GM12878 (cell line): ENCODE measurements at regions of chr5 and their contacts with region 1.

Region 1: DNA sequence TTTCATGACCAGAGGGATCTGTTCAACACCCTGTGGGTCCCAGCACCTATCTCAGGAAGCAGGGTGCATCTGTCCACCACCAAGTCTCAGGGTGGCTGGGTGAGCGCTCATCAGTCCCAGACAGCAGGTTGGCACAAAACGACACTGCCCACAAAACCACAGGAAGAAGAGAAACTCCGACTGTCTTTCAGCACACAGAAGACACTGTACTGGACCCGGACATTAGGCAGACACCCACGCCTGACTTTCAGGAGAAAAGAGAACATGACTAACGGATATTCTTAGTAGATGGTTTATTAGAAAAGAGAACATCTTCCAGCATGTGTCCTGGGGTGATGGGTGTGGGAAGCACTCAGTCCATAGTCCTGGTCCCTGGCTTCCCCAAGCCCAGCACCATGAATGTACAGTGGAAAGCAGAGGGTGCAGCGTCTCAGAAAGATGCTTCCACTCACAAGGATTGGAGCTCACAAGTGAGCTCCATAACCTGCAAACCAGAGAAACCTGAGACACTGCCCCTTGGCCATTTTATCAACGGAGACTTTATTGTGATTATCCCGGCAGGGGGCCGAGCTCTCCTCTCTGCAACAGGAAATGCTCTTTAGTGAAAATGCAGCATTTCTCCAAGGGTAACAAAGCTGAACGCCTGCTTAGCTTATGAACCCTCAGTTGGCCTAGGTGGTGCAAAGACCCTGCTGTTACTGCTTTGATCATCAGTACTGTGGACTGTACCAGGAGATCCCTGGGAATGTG is 35.8 kb upstream of the LCP2 start:
- DNase-seq: peak; percentile 79
- ATAC-seq: peak; percentile 54
- H3K4me3 ChIP-seq: no peak overlapping the region
- H3K27ac ChIP-seq: 0 out of 2 replicates have a peak overlapping the region, but pooled peaks have one; percentile 5
- H3K4me1 ChIP-seq: peaks cover 46% of the 10 kb centered on the region
- H3K27me3 ChIP-seq: no peaks in the 10 kb centered on the region
- CTCF ChIP-seq: no peak
- EP300 ChIP-seq: 0 out of 4 replicates have a peak, but pooled peaks of 1 of the 2 experiments have one; percentile 28
- POLR2A ChIP-seq: no peak
- RAD21 ChIP-seq: 0 out of 2 replicates have a peak, but pooled peaks have one; percentile 4

Region 2: GRCh38 chr5:169339869-169340268 is 993.5 kb before region 1 on chr5:
- CTCF ChIA-PET with region 1: no interaction called
- POLR2A ChIA-PET with region 1: no interaction called
- RAD21 ChIA-PET with region 1: no interaction called
- SMC1A ChIA-PET with region 1: no interaction called
- in situ Hi-C with region 1: no loop called
- intact Hi-C with region 1: no loop called
- DNase-seq: peak; percentile 8
- ATAC-seq: peak; percentile 20
- H3K4me3 ChIP-seq: no peak overlapping the region
- H3K27ac ChIP-seq: no peak overlapping the region
- H3K4me1 ChIP-seq: no peaks in the 10 kb centered on the region
- H3K27me3 ChIP-seq: 0 out of 4 replicates have a peak, but pooled peaks cover 2% of the 10 kb centered on the region in 2 experiments
- CTCF ChIP-seq: no peak
- EP300 ChIP-seq: no peak
- POLR2A ChIP-seq: no peak
- RAD21 ChIP-seq: no peak

Region 3: DNA sequence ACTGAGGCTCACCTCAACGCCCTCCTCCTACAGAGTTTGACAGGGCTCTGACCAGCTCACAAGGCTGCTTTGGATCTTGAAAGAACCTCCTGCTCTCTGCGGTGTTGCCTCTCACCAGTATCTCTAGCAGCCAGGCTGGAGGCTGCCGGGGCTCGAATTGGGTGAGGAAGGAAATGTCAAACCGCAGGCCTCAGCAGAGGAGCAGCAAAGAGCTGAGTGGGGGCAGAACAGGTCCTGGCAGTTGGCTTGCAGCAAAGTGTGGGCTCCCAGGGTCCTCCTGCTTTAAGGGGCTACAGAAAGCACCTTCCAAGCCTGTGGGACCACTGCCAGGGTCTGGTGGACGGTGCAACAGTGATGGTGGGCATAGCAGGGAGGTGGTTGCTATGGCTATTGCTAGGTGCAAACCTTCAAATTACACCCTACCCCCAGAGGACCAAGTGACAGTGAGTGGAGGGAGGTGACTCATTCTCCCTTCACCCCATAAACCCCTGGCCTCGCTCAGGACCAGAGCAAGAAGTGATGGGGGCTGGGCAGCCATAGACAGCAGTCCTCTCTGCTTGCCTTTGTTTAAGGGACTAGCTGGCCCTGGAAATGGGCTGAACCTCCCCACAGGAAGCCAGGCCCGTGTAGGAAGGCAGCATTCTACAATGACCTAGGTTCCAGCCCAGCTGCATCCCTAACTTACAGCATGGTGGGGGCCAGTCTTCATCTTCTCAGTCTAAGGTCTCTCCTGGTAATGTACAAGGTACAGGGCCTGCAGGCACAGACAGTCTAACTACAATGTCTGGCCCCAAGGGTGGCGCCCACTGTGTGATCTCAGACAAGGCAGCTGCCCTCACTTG is 54.5 kb before region 1 on chr5:
- CTCF ChIA-PET with region 1: interaction called, 126 read pairs
- POLR2A ChIA-PET with region 1: interaction called, 11 read pairs
- RAD21 ChIA-PET with region 1: interaction called, 81 read pairs
- SMC1A ChIA-PET with region 1: interaction called, 125 read pairs
- in situ Hi-C with region 1: loop called (anchors 5 kb)
- intact Hi-C with region 1: loop called (anchors 1 kb)
- DNase-seq: peak; percentile 78
- ATAC-seq: peak; percentile 86
- H3K4me3 ChIP-seq: peak overlapping the region; percentile 2; the same call in 1 of the 2 replicates
- H3K27ac ChIP-seq: peak overlapping the region; percentile 91
- H3K4me1 ChIP-seq: peaks cover 36% of the 10 kb centered on the region
- H3K27me3 ChIP-seq: no peaks in the 10 kb centered on the region
- CTCF ChIP-seq: no peak
- EP300 ChIP-seq: 0 out of 4 replicates have a peak, but pooled peaks of 1 of the 2 experiments have one; percentile 13
- POLR2A ChIP-seq: peak; percentile 56; the same call in 1 of the 2 replicates
- RAD21 ChIP-seq: peak; percentile 27; the same call in 1 of the 2 replicates

Region 4: GRCh38 chr5:170302653-170303501 is 30.5 kb before region 1 on chr5:
- CTCF ChIA-PET with region 1: interaction called, 139 read pairs
- POLR2A ChIA-PET with region 1: interaction called, 169 read pairs
- RAD21 ChIA-PET with region 1: interaction called, 274 read pairs
- SMC1A ChIA-PET with region 1: interaction called, 274 read pairs
- in situ Hi-C with region 1: no loop called
- intact Hi-C with region 1: no loop called
- DNase-seq: peak; percentile 68
- ATAC-seq: peak; percentile 89
- H3K4me3 ChIP-seq: no peak overlapping the region
- H3K27ac ChIP-seq: peak overlapping the region; percentile 24; the same call in 1 of the 2 replicates
- H3K4me1 ChIP-seq: peaks cover 34% of the 10 kb centered on the region
- H3K27me3 ChIP-seq: no peaks in the 10 kb centered on the region
- CTCF ChIP-seq: no peak
- EP300 ChIP-seq: no peak
- POLR2A ChIP-seq: no peak
- RAD21 ChIP-seq: no peak

Region 5: GRCh38 chr5:170319301-170319700 is 14.0 kb before region 1 on chr5:
- CTCF ChIA-PET with region 1: interaction called, 19 read pairs
- POLR2A ChIA-PET with region 1: interaction called, 9 read pairs
- RAD21 ChIA-PET with region 1: interaction called, 4 read pairs
- SMC1A ChIA-PET with region 1: interaction called, 16 read pairs
- in situ Hi-C with region 1: no loop called
- intact Hi-C with region 1: no loop called
- DNase-seq: no peak
- ATAC-seq: no peak
- H3K4me3 ChIP-seq: no peak overlapping the region
- H3K27ac ChIP-seq: no peak overlapping the region
- H3K4me1 ChIP-seq: no peaks in the 10 kb centered on the region
- H3K27me3 ChIP-seq: no peaks in the 10 kb centered on the region; a peak in 1 of 4 replicates
- CTCF ChIP-seq: no peak
- EP300 ChIP-seq: no peak
- POLR2A ChIP-seq: no peak
- RAD21 ChIP-seq: no peak

Region 6: GRCh38 chr5:170388818-170389549 is 55.6 kb after region 1 on chr5 and contains the start of gene KCNMB1:
- CTCF ChIA-PET with region 1: interaction called, 15 read pairs
- POLR2A ChIA-PET with region 1: interaction called, 4 read pairs
- RAD21 ChIA-PET with region 1: interaction called, 21 read pairs
- SMC1A ChIA-PET with region 1: interaction called, 5 read pairs
- in situ Hi-C with region 1: no loop called
- intact Hi-C with region 1: loop called (anchors 5 kb)
- DNase-seq: no peak
- ATAC-seq: peak; percentile 57
- H3K4me3 ChIP-seq: peak within 1 kb of the TSS; percentile 5; the same call in 1 of the 2 replicates
- H3K27ac ChIP-seq: peak within 1 kb of the TSS; percentile 22; the same call in 1 of the 2 replicates
- H3K4me1 ChIP-seq: peaks cover 20% of the 10 kb centered on the region
- H3K27me3 ChIP-seq: no peaks in the 10 kb centered on the region
- CTCF ChIP-seq: no peak
- EP300 ChIP-seq: no peak
- POLR2A ChIP-seq: no peak
- RAD21 ChIP-seq: no peak
- polyA plus RNA-seq, gene KCNMB1: 2.3 to 2.8 TPM